Naive thymus-derived CD4-positive, alpha-beta T cell (primary cell): ENCODE measurements at regions of chr7 and their contacts with region 1.

Region 1: GRCh38 chr7:108459931-108460551 is 3.8 kb upstream of the NRCAM start:
- DNase-seq: peak in 5 of 9 donors; percentile 15 to 40 (median 26)
- ATAC-seq: peak; percentile 28
- H3K4me3 ChIP-seq: no peak overlapping the region
- H3K4me3 Mint-ChIP-seq: peak overlapping the region in 1 of 10 donors; percentile 4
- H3K27ac ChIP-seq: no peak overlapping the region
- H3K27ac Mint-ChIP-seq: peak overlapping the region in 7 of 9 donors; percentile 2 to 68 (median 19)
- H3K4me1 ChIP-seq: peaks cover 0 to 23% of the 10 kb centered on the region in 2 donors
- H3K4me1 Mint-ChIP-seq: peaks cover 5 to 77% (median 64%) of the 10 kb centered on the region in 7 donors
- H3K27me3 ChIP-seq: no peaks in the 10 kb centered on the region
- H3K27me3 Mint-ChIP-seq: peaks cover 22 to 42% (median 23%) of the 10 kb centered on the region in 5 donors

Region 2: DNA sequence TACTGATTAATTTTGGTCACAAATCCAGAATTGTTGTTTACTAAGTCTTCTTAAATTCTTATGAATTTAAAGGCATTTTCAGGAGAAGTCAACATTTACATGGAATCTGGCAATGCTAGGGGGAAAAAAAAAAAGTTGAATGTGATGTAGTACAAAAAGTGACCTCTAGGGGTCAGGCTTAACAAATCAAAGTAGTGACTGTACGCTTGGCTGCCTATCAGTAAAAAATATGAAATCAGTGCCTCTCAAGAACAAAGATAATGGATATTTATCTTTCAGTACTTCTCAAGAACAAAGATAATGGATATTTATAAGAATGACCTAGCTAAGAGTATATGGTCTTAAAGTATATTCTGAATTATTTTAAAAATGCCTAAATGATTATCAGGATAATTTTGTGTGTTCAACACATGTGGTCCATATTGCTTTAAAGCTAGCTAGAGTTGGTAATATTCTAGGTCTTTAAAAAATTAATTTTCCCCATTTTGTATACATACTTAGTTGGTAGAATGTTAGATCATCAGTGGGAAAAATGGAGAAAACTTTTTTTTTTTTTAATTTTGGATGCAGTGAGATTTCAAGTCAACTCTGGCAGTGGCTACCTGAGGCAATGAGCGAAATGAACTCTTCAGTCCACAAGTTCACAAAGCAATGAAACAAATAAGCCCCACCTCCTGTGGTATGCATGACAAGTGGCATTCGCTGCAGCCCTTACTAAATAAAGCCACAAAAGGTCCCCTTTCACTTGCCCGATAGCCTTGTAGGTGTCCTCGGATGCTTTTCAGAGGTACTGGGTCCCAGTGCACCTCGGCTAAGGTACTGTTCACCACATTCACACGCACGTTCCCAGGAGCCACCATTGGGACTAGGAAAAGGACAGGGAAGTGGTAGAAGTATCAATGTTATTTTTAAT is 278.7 kb before region 1 on chr7:
- CTCF ChIA-PET with region 1: no interaction called
- POLR2A ChIA-PET with region 1: no interaction called
- intact Hi-C with region 1: loop called in 1 of 2 experiments (anchors 2 kb)
- DNase-seq: peak in 6 of 9 donors; percentile 16 to 64 (median 46)
- ATAC-seq: peak; percentile 74
- H3K4me3 ChIP-seq: no peak overlapping the region
- H3K4me3 Mint-ChIP-seq: no peak overlapping the region
- H3K27ac ChIP-seq: no peak overlapping the region
- H3K27ac Mint-ChIP-seq: no peak overlapping the region
- H3K4me1 ChIP-seq: no peaks in the 10 kb centered on the region
- H3K4me1 Mint-ChIP-seq: no peaks in the 10 kb centered on the region
- H3K27me3 ChIP-seq: no peaks in the 10 kb centered on the region
- H3K27me3 Mint-ChIP-seq: peaks cover 0 to 8% (median 0%) of the 10 kb centered on the region in 5 donors

Region 3: GRCh38 chr7:108376206-108376605 is 83.8 kb before region 1 on chr7:
- CTCF ChIA-PET with region 1: no interaction called
- POLR2A ChIA-PET with region 1: no interaction called
- intact Hi-C with region 1: no loop called
- DNase-seq: no peak
- ATAC-seq: no peak
- H3K4me3 ChIP-seq: no peak overlapping the region
- H3K4me3 Mint-ChIP-seq: no peak overlapping the region
- H3K27ac ChIP-seq: no peak overlapping the region
- H3K27ac Mint-ChIP-seq: no peak overlapping the region
- H3K4me1 ChIP-seq: no peaks in the 10 kb centered on the region
- H3K4me1 Mint-ChIP-seq: peaks cover 0 to 2% (median 0%) of the 10 kb centered on the region in 7 donors
- H3K27me3 ChIP-seq: no peaks in the 10 kb centered on the region
- H3K27me3 Mint-ChIP-seq: peaks cover 0 to 17% (median 7%) of the 10 kb centered on the region in 5 donors

Region 4: GRCh38 chr7:108442039-108442568 is 17.9 kb before region 1 on chr7:
- CTCF ChIA-PET with region 1: no interaction called
- POLR2A ChIA-PET with region 1: no interaction called
- intact Hi-C with region 1: no loop called
- DNase-seq: no peak
- ATAC-seq: no peak
- H3K4me3 ChIP-seq: no peak overlapping the region
- H3K4me3 Mint-ChIP-seq: no peak overlapping the region
- H3K27ac ChIP-seq: no peak overlapping the region
- H3K27ac Mint-ChIP-seq: no peak overlapping the region
- H3K4me1 ChIP-seq: no peaks in the 10 kb centered on the region
- H3K4me1 Mint-ChIP-seq: no peaks in the 10 kb centered on the region
- H3K27me3 ChIP-seq: no peaks in the 10 kb centered on the region
- H3K27me3 Mint-ChIP-seq: peaks cover 0 to 14% (median 5%) of the 10 kb centered on the region in 5 donors

Region 5: DNA sequence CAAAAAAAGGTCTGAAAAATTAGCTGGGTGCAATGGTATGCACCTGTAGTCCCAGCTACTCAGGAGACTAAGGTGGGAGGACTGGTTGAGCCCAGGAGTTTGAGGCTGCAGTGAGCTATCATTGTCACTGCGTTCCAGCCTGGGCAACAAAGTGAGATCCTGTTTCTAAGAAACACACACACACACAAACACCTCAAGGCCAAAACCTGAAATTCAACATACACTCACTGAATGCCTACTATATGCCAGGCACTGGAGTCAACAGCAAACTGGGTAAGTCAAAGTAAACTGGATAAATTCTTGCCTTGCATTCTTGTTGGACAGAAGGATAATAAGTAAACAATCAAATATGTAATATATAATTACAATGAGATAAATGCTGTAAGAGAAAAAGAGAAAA is 17.7 kb after region 1 on chr7:
- CTCF ChIA-PET with region 1: no interaction called
- POLR2A ChIA-PET with region 1: no interaction called
- intact Hi-C with region 1: loop called in 1 of 2 experiments (anchors 1 kb)
- DNase-seq: no peak
- ATAC-seq: no peak
- H3K4me3 ChIP-seq: no peak overlapping the region
- H3K4me3 Mint-ChIP-seq: no peak overlapping the region
- H3K27ac ChIP-seq: no peak overlapping the region
- H3K27ac Mint-ChIP-seq: peak overlapping the region in 1 of 9 donors; percentile 5
- H3K4me1 ChIP-seq: no peaks in the 10 kb centered on the region
- H3K4me1 Mint-ChIP-seq: peaks cover 0 to 2% (median 0%) of the 10 kb centered on the region in 7 donors
- H3K27me3 ChIP-seq: no peaks in the 10 kb centered on the region
- H3K27me3 Mint-ChIP-seq: no peaks in the 10 kb centered on the region

Region 6: DNA sequence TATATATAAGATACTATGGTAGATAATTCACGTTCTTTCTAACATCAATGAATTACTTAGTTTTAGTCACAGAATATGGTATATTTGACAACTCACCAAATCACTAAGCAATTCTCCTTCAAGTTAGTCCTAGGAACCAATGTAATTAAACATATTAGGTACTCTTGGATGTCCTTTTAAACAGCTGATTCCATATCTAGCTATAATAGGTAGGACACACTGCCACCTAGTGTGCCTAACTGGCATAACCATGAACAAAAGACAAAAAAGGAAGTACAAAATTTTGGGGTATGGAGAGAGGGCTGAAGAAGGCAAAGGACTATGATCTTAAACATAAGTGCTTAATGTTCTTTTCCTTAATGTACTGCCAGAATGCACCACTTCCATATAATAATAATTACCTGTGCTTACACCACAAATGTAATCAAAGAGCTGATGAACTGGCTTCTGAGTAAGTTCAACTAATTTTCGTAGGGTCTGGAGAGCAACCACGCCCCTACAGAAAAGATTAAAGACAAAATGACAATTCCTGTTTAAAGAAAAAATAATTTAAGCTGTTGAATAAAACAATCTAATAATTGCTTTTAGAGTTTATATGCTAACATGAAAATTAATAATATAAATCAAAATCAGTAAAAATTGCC is 37.2 kb after region 1 on chr7:
- CTCF ChIA-PET with region 1: interaction called, 67 read pairs
- POLR2A ChIA-PET with region 1: interaction called, 6 read pairs
- intact Hi-C with region 1: no loop called
- DNase-seq: peak in 8 of 9 donors; percentile 21 to 59 (median 55)
- ATAC-seq: peak; percentile 88
- H3K4me3 ChIP-seq: no peak overlapping the region
- H3K4me3 Mint-ChIP-seq: no peak overlapping the region
- H3K27ac ChIP-seq: no peak overlapping the region
- H3K27ac Mint-ChIP-seq: peak overlapping the region in 2 of 9 donors; percentile 6 to 43
- H3K4me1 ChIP-seq: no peaks in the 10 kb centered on the region
- H3K4me1 Mint-ChIP-seq: peaks cover 0 to 5% (median 0%) of the 10 kb centered on the region in 7 donors
- H3K27me3 ChIP-seq: no peaks in the 10 kb centered on the region
- H3K27me3 Mint-ChIP-seq: no peaks in the 10 kb centered on the region

Region 7: GRCh38 chr7:108569381-108570145 is 109.5 kb after region 1 on chr7 and contains the starts of genes DNAJB9 and THAP5:
- CTCF ChIA-PET with region 1: no interaction called
- POLR2A ChIA-PET with region 1: interaction called, 3 read pairs
- intact Hi-C with region 1: loop called in 1 of 2 experiments (anchors 2 kb)
- DNase-seq: peak; percentile 94 to 100 (median 100)
- ATAC-seq: peak; percentile 94
- H3K4me3 ChIP-seq: peak within 1 kb of the TSS; percentile 86
- H3K4me3 Mint-ChIP-seq: peak within 1 kb of the TSS; percentile 93 to 99 (median 98)
- H3K27ac ChIP-seq: peak within 1 kb of the TSS; percentile 98
- H3K27ac Mint-ChIP-seq: peak within 1 kb of the TSS; percentile 98 to 100 (median 100)
- H3K4me1 ChIP-seq: peaks cover 21 to 34% of the 10 kb centered on the region in 2 donors
- H3K4me1 Mint-ChIP-seq: peaks cover 18 to 81% (median 68%) of the 10 kb centered on the region in 7 donors
- H3K27me3 ChIP-seq: no peaks in the 10 kb centered on the region
- H3K27me3 Mint-ChIP-seq: peaks cover 0 to 3% (median 0%) of the 10 kb centered on the region in 5 donors
- total RNA-seq, gene DNAJB9: 22.7 to 50.0 (median 29.3) TPM
- total RNA-seq, gene THAP5: 21.0 to 54.7 (median 30.8) TPM